ENCODE measurements at regions of chr6 and their contacts with region 1.

Region 1: DNA sequence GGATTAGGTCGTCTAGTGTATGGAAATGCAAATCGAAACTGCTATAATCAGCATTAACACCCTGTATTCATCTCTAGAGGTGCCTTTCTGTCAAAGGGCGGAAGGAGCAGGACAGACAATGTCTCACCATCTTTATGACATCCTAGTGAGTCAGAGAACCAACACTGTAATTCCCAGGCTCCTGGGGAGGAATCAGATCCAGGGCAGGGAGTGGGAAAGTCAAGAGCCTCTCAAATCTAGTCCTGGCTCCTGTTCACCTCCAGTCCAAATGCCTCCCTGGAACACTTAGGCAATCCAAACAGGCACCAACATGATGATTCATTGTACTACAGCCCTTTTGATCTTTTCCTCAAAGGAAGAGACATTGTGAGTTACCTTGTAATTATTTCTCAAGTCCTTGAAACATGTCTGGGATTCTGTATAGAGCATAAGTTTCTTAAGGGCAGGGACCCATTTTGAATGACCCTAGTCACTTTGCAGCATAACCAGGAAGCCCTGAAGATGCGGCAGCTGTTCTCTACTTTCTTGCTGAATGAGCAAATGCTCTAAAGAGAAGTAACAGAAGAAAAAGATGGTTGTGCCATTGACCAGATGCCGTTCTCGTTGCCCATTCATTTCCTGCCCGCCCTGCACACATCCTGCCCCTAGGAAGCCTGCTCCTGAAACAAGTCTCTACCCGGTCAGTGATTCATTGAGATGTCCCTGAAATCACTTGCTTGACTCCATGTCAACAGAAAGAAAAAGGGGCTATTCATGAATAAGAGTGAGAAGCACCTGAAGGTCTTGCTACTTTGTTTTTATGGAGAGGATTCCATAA is 112.8 kb upstream of the JARID2 start:
- DNase-seq: no peak

Region 2: DNA sequence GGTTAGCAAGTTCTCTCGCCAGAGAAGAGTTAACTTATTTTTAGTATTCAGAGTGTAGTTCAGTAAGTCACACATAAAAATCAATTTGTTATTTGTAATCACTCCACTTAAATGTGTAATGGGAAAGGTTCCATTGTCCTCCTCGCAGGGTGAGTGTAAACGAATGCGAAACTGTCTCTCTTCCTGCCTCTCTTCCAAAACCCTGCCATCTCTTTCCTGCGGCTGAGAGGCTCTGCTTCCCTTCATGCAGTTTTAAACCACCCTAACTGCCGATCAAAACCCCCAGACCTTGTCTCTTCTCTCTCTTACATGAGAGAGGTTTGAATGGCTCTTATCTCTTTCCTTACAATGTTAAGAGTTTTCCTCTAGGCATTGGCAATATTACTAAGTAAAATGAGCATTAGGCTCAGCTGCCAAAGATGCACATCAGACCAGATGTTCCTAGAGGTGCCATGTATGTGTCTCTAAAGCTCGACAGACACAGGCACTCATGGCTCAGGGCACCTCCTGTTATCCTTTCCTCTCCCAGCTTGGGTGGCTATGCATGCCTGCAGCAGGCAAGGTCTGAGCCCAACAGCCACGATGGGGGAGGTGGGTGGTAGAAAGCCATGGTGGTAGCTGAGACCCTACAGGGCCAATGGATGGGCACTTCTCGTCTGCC is 204.0 kb after region 1 on chr6:
- intact Hi-C with region 1: loop called in 1 of 2 experiments (anchors 2 kb)
- DNase-seq: no peak

Measured in posterior vena cava (tissue), 2 donors.